ENCODE measurements at regions of chr3 and their contacts with region 1.

Region 1: GRCh38 chr3:59857589-59858346 is 807.9 kb upstream of the CFAP20DC start:
- DNase-seq: peak; percentile 51
- H3K4me3 Mint-ChIP-seq: no peak overlapping the region
- H3K27ac Mint-ChIP-seq: no peak overlapping the region
- H3K4me1 Mint-ChIP-seq: peaks cover 4% of the 10 kb centered on the region
- H3K27me3 Mint-ChIP-seq: no peaks in the 10 kb centered on the region

Region 2: DNA sequence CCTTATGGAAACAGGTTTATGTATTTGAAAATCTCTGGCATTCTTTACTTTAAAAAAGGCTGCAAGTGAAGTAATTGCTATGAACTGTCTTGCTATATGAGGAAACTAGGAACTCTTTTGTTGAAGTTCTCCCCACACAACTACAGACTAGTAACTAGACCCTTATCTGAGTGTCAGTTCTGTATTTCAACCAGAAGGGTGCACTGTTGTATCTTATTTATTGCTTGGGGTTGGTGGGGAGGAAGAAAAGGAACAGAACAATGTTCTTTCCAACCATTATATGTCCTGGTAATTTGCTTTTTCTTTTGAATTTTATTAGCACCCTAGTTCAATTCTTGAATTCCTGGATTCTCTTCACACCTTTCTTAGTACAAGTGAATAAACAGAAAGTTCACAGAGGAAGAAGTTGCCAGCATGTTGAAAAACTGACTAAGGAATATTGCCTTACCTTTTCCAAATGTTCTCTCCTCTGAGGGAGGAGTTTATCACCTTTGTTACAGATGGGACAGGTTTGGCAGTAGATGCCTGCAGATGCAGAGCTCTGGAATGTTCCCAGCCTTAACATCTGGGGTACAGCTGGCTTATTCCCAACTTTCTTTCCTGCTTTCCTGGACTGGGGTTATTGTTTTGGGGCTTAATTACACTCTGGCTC is 645.5 kb before region 1 on chr3:
- intact Hi-C with region 1: loop called (anchors 1 kb)
- DNase-seq: no peak
- H3K4me3 Mint-ChIP-seq: no peak overlapping the region
- H3K27ac Mint-ChIP-seq: no peak overlapping the region
- H3K4me1 Mint-ChIP-seq: no peaks in the 10 kb centered on the region
- H3K27me3 Mint-ChIP-seq: peaks cover 12% of the 10 kb centered on the region

Region 3: GRCh38 chr3:59313365-59313764 is 544.4 kb before region 1 on chr3:
- intact Hi-C with region 1: loop called (anchors 1 kb)
- DNase-seq: peak; percentile 15
- H3K4me3 Mint-ChIP-seq: no peak overlapping the region
- H3K27ac Mint-ChIP-seq: no peak overlapping the region
- H3K4me1 Mint-ChIP-seq: peaks cover 8% of the 10 kb centered on the region
- H3K27me3 Mint-ChIP-seq: peaks cover 3% of the 10 kb centered on the region

Region 4: DNA sequence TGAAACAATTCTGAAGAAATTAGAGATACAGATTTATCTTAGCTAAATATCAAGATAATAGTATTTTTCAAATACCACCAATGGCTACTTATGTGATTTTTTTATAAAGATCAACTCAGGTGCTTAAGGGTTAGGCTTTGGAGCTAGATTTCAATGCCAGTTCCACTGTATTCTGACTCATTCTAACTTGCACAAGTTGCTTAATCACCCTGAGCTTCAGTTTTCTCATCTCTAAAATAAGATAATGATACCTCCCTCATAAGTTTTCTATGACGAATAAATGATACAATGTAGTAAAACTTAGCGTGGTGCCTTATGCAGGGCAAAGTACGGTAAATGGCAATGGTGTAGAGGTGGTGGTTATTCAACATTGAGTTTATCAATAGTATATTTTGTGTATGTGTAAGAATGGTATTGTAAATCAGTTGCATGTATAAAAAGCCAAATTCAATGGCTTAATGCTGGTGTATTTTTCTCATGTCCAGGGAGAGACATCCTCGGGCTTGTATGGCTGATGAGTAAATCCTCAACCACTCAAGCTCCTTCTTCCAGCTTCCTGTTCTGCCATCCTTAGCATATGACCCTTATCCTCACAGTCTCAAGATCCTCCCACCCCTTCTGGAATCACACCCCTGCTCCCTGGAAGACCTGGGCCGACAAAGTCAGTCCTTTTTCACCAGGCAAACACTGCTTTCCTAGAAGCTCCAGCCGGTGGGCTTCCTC is 302.0 kb before region 1 on chr3:
- intact Hi-C with region 1: no loop called
- DNase-seq: no peak
- H3K4me3 Mint-ChIP-seq: no peak overlapping the region
- H3K27ac Mint-ChIP-seq: no peak overlapping the region
- H3K4me1 Mint-ChIP-seq: peaks cover 17% of the 10 kb centered on the region
- H3K27me3 Mint-ChIP-seq: no peaks in the 10 kb centered on the region

Region 5: GRCh38 chr3:59771768-59772181 is 86.0 kb before region 1 on chr3:
- intact Hi-C with region 1: loop called (anchors 5 kb)
- DNase-seq: no peak
- H3K4me3 Mint-ChIP-seq: no peak overlapping the region
- H3K27ac Mint-ChIP-seq: no peak overlapping the region
- H3K4me1 Mint-ChIP-seq: peaks cover 50% of the 10 kb centered on the region
- H3K27me3 Mint-ChIP-seq: no peaks in the 10 kb centered on the region

Region 6: DNA sequence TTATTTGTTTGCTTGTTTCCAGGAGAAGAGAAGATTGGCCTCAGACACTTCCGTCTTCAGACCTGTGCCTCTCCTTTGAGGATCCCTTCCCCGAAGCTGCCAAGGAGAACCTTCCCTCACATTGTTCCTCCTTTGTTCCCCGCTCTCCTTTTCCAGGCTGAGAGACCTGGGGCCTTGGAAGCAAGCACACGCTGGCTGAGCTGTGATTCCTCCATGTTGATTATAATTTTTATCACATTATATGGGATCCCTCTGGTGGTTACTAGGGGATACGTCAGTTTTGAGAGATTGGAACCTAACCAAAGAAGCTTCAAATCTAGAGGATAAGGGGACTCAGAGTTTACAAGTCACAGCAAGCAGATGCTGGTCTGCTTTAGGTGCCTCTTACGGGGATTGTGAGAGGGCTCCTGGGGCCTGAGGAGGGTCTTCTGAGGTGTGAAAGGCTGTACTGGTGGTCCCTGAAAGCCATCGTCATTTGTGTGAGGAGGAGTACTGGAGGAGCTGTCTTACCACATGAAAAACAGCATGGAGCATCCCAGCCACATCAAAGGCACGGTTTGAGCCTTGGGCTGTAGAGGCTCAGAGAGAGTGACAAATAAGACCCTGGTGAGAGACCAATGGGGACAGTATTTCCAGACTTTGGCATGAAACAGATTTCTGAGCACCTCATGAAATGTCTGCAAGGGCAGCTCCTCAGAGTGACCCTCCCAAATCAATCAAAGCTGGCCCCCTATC is 47.9 kb before region 1 on chr3:
- intact Hi-C with region 1: loop called (anchors 1 kb)
- DNase-seq: no peak
- H3K4me3 Mint-ChIP-seq: no peak overlapping the region
- H3K27ac Mint-ChIP-seq: no peak overlapping the region
- H3K4me1 Mint-ChIP-seq: peaks cover 7% of the 10 kb centered on the region
- H3K27me3 Mint-ChIP-seq: no peaks in the 10 kb centered on the region

Measured in activated T-helper 2 cell treated with anti-CD3 and anti-CD28 coated beads, Interferon-gamma antibody, Interleukin-2, Interleukin-4, amounts not matched to agents 10 μg/mL and 5 μg/mL and 100 μg/mL, durations not matched to agents 14 hours and 24 hours and 36 hours (primary cell).